ENCODE measurements at regions of chr15 and their contacts with region 1.

Region 1: GRCh38 chr15:33398555-33398954 is 87.8 kb downstream of the RYR3 start:
- DNase-seq: no peak
- ATAC-seq: no peak
- H3K4me3 ChIP-seq: no peak overlapping the region
- H3K27ac ChIP-seq: no peak overlapping the region
- H3K4me1 ChIP-seq: peaks cover 33 to 42% of the 10 kb centered on the region in 2 donors
- H3K27me3 ChIP-seq: no peaks in the 10 kb centered on the region
- CTCF ChIP-seq: no peak
- POLR2A ChIP-seq: no peak

Region 2: GRCh38 chr15:33467816-33468163 is 69.2 kb after region 1 on chr15:
- in situ Hi-C with region 1: loop called in 1 of 4 experiments (anchors 10 kb)
- intact Hi-C with region 1: loop called (anchors 5 kb)
- DNase-seq: peak; percentile 23 to 69
- ATAC-seq: peak; percentile 87 to 92
- H3K4me3 ChIP-seq: peak overlapping the region in 1 of 4 donors; percentile 11
- H3K27ac ChIP-seq: peak overlapping the region; percentile 80 to 85 (median 82)
- H3K4me1 ChIP-seq: peaks cover 11 to 16% of the 10 kb centered on the region in 2 donors
- H3K27me3 ChIP-seq: no peaks in the 10 kb centered on the region
- CTCF ChIP-seq: no peak
- POLR2A ChIP-seq: no peak